Right ventricle myocardium inferior (tissue), 1 donor: ENCODE measurements at regions of chr6 and their contacts with region 1.

Region 1: DNA sequence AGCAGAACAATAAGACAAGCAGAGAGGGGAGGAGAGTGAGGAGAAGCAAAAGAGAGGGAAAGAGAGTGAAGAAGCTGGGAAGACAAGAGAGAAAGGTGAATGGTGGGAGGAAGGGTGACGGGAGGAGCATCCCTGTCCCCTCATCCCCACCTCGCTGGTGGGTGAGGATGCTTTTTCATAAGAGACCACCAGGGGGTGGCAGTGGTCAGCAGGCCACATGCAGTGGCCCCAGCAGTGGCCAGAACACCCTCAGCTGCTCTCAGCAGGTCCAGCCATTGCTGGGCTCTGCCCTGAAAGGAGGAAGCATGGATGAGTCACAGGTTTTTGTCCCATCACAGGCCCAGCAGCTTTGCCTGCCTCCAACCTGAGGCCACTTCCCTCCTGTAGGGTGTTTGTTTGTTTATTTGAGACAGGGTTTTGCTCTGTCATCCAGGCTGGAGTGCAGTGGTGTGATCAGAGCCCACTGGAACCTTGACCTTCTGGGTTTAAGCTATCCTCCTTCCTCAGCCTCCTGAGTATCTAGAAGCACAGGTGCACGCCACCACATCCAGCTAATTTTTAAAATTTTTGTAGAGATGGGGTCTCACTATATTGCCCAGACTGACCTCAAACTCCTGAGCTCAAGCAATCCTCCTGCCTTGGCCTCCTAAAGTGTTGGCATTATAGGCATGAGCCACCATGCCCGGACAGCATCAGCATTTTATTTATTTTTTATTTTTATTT is 24.0 kb downstream of the FGD2 start:
- DNase-seq: peak; percentile 93
- ATAC-seq: peak; percentile 92

Region 2: DNA sequence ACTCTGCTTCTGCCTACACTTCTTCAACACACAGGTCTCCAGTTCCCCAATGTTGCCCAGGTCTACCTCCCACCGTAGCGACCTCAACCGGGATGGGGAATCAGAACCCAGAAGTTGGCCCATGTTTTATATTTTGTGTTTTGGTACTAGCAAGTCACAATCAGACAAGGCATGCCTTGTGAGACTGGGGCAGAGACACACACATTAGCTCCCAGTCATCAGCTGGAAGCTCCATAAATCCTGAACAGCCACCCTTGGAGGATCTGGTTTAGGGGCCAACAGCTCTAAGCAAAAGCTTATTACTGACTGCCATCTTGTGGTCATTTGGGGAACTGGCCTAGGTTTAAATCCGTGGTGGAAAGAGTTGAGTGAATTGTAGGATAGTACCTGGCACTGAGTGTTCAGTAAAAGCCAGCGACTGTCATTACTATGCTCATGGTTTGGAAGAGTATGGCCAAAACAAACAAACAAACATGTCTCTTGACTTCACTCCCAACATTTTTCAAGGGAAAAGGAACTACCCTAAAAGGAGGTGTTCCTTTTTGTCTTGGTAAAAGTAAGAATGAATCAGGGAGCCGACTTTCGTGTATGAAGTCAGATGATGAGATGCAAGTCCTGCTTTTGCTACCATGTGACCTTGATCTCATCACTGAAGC is 181.0 kb after region 1 on chr6:
- intact Hi-C with region 1: loop called (anchors 1 kb)
- DNase-seq: no peak
- ATAC-seq: peak; percentile 83